ENCODE measurements at regions of chr2 and their contacts with region 1.

Region 1: GRCh38 chr2:16773080-16773713 is 107.6 kb upstream of the CYRIA start:
- DNase-seq: peak; percentile 38 to 81 (median 56)
- H3K4me3 ChIP-seq: no peak overlapping the region
- H3K27ac ChIP-seq: no peak overlapping the region
- H3K4me1 ChIP-seq: no peaks in the 10 kb centered on the region
- H3K27me3 ChIP-seq: no peaks in the 10 kb centered on the region
- CTCF ChIP-seq: peak; percentile 30 to 78 (median 64)
- POLR2A ChIP-seq: no peak

Region 2: GRCh38 chr2:16890081-16890480 is 116.9 kb after region 1 on chr2:
- intact Hi-C with region 1: loop called in 1 of 2 experiments (anchors 10 kb)
- DNase-seq: no peak
- H3K4me3 ChIP-seq: no peak overlapping the region
- H3K27ac ChIP-seq: no peak overlapping the region
- H3K4me1 ChIP-seq: no peaks in the 10 kb centered on the region
- H3K27me3 ChIP-seq: no peaks in the 10 kb centered on the region
- CTCF ChIP-seq: no peak
- POLR2A ChIP-seq: no peak

Region 3: DNA sequence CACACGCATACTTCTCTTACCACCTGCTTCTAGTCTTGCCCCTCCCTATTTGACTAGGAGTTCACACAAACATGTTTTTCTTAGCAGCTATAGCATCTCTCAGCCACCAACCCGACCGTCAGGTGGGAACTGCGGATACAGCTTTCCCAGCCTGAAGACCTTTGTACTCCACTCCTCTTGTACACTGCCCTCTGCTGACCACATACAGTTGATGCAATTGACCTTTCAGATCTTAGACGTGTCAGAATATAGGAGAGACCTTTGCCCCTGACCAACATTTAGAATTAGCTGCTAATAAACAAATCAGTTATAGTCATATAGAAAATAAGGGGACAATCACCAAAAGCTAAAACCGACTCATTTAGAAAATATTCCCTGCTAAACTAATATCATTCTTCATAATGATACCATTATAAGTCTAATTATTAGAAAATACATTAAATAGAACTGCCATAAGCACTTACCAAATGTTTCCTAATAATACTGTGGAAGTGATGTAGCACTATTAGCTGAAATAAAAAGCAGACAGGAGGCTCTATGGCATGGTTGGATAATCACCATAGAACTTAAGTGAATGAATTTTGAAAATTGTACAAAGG is 536.6 kb after region 1 on chr2:
- intact Hi-C with region 1: loop called (anchors 5 kb)
- DNase-seq: peak; percentile 27 to 66 (median 46)
- H3K4me3 ChIP-seq: no peak overlapping the region
- H3K27ac ChIP-seq: no peak overlapping the region
- H3K4me1 ChIP-seq: no peaks in the 10 kb centered on the region
- H3K27me3 ChIP-seq: no peaks in the 10 kb centered on the region
- CTCF ChIP-seq: peak; percentile 53 to 71 (median 60)
- POLR2A ChIP-seq: no peak